ENCODE measurements at regions of chrX and their contacts with region 1.

Region 1: GRCh38 chrX:43579211-43579610 is 76.9 kb upstream of the MAOA start:
- DNase-seq: no peak
- H3K4me3 Mint-ChIP-seq: no peak overlapping the region
- H3K27ac Mint-ChIP-seq: peak overlapping the region; percentile 76
- H3K4me1 Mint-ChIP-seq: peaks cover 13% of the 10 kb centered on the region
- H3K27me3 Mint-ChIP-seq: no peaks in the 10 kb centered on the region

Region 2: DNA sequence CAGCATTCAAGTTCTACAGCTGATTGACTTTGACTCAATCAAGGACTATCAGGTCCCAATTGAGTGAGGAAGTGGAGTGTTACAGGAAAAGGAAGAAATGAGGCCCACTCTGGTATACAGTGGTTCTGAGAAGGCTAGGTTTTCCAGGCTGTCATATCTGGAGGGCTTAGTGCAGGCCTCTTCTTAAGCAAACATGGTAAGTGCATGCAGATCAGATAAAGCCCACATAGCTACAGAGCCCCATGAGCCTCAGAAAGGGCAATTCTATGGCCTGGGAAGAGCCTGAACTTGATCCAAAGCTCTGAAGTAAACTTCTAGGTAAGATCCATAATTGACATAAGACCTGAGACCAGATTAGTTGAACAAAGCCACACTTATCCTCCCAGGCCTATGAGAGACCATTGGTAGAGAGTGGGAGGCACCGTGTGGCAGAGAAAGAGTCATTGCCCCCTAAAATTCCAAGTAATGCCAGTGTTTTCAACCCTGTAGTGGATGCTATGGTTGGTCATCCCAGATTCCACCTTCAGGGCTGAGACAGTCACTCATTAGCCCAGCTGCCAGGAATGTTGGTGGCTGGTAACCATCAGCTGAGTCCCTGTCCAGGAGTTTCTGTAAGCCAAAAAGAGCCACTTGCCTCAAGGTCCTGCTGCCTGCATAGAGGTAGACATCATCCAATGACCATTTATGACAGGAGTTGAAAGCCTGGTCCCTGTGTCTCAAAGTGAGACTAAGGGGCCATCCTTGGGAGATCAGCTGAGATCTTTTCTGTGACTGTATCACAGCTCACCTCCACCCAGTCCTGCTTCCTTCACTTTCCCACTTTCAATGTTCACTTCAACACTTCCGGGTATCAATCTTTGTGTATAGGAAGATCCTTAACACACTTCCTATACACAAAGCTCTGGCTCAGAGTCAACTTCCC is 48.2 kb after region 1 on chrX:
- intact Hi-C with region 1: loop called (anchors 5 kb)
- DNase-seq: no peak
- H3K4me3 Mint-ChIP-seq: no peak overlapping the region
- H3K27ac Mint-ChIP-seq: peak overlapping the region; percentile 86
- H3K4me1 Mint-ChIP-seq: peaks cover 26% of the 10 kb centered on the region
- H3K27me3 Mint-ChIP-seq: no peaks in the 10 kb centered on the region

Region 3: DNA sequence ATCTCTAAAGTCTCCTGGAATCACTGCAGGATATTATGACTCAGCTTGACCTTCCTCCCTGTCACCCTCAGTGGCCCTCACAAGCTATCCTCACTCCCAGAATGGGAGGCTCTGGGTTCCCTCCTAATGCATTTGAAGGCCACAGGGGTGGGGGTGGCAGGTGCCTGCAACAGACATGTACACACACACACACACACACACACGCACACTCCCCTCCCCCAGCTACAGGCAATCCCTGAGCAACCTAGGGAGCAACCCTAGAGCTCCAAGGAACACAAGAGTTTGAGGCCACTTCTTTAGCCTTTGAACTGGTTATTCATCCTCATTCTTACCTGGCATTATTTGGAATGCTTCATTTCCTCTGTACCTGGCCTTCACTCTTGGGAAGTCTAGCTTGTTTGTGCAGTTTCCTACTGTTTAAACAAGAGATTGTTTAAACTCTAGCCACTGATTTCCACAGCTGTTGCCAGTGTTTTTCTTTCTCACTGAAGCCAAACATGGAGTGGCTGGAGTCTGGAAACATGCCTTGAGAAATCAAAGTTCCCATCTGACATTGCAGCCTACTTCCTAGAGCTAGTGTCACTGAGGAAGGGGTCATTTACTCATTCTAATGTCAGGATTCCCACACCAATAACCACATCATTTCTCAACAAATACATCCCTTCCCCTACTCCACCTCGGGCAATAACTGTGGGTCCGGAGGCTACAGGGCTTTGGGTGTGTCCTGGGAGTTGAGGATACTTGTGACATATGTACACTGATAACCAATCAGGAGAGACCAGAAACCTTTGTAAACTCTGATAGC is 114.6 kb after region 1 on chrX:
- intact Hi-C with region 1: no loop called
- DNase-seq: no peak
- H3K4me3 Mint-ChIP-seq: no peak overlapping the region
- H3K27ac Mint-ChIP-seq: no peak overlapping the region
- H3K4me1 Mint-ChIP-seq: peaks cover 11% of the 10 kb centered on the region
- H3K27me3 Mint-ChIP-seq: no peaks in the 10 kb centered on the region

Measured in activated T-helper 2 cell treated with anti-CD3 and anti-CD28 coated beads, Interferon-gamma antibody, Interleukin-2, Interleukin-4, amounts not matched to agents 10 μg/mL and 5 μg/mL and 100 μg/mL, durations not matched to agents 14 hours and 24 hours and 36 hours (primary cell).